Activated B cell treated with CpG ODN at 0.5 μM for 24 hours (primary cell): ENCODE measurements at regions of chr1 and their contacts with region 1.

Region 1: DNA sequence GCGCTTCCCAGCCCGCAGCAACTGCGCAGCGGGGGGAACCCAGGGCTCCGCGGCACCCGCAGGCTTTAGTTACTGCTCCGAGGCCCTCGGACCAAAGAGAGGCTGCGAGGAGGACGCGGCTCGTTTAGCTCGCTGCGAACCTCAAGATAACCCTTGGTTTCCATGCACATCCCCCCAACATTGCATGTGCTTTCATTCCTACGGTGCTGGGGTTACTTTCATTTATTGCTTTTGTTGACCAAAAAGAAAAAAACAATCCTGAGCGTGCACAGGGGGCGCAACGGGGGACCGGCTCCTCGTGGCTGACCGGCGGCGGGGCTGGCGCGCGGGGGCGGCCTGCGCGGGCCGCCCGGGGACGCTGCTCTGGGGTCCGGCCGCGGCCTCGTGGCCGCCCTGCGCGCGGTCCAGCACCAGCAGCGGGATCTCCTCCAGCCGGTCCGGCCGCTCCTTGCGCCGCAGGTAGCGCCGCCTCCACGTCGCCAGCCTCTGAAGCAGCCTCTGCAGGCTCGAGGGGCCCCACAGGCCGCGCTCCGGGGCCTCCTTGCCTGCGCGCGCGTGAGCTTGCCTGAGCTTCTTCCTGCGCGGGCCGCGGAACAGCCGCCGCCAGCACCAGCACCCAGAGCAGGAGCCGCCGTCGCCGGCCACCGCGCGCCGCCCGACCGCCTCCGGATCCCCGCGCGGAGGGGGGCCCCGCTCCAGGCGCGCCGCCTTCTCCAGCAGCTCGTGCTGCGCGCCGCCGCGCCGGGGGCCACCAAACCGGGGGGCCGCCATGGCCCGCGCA is 77.4 kb downstream of the DESI2 start:
- DNase-seq: peak; percentile 48
- ATAC-seq: peak; percentile 46
- H3K4me3 Mint-ChIP-seq: peak overlapping the region; percentile 87
- H3K27ac Mint-ChIP-seq: peak overlapping the region; percentile 83
- H3K4me1 Mint-ChIP-seq: peaks cover 23% of the 10 kb centered on the region
- H3K27me3 Mint-ChIP-seq: no peaks in the 10 kb centered on the region
- CTCF ChIP-seq: no peak

Region 2: GRCh38 chr1:244461245-244462071 is 268.9 kb before region 1 on chr1 and contains the start of gene CATSPERE:
- CTCF ChIA-PET with region 1: no interaction called
- POLR2A ChIA-PET with region 1: no interaction called
- intact Hi-C with region 1: loop called (anchors 5 kb)
- DNase-seq: peak; percentile 79
- ATAC-seq: peak; percentile 97
- H3K4me3 Mint-ChIP-seq: peak within 1 kb of the TSS; percentile 86
- H3K27ac Mint-ChIP-seq: peak within 1 kb of the TSS; percentile 78
- H3K4me1 Mint-ChIP-seq: peaks cover 15% of the 10 kb centered on the region
- H3K27me3 Mint-ChIP-seq: no peaks in the 10 kb centered on the region
- CTCF ChIP-seq: no peak
- total RNA-seq, gene CATSPERE: 0.91 and 1.1 TPM in 2 replicates

Region 3: GRCh38 chr1:244545511-244545910 is 184.8 kb before region 1 on chr1:
- CTCF ChIA-PET with region 1: no interaction called
- POLR2A ChIA-PET with region 1: no interaction called
- intact Hi-C with region 1: no loop called
- DNase-seq: no peak
- ATAC-seq: no peak
- H3K4me3 Mint-ChIP-seq: no peak overlapping the region
- H3K27ac Mint-ChIP-seq: no peak overlapping the region
- H3K4me1 Mint-ChIP-seq: no peaks in the 10 kb centered on the region
- H3K27me3 Mint-ChIP-seq: no peaks in the 10 kb centered on the region
- CTCF ChIP-seq: no peak

Region 4: DNA sequence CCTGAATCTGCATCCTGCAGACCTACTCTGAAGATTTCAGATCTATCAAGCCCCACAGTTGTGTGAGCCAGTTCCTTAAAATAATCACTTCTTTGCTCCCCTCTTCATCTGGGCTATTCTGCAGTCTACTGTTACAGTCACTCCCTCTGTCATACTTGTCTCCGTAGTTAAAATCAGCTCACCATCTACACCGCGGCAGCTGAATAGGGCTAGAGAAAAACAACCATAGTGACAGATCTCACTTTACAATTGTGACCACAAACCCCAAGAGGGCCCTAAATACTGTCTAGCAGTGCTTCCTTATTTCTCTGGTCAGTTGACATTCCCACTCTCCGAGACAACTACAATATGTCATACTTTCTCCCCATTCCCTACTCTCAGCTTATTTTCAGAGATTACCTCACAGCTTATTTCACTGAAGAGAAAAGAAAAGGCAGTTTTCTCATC is 64.5 kb before region 1 on chr1:
- CTCF ChIA-PET with region 1: no interaction called
- POLR2A ChIA-PET with region 1: interaction called, 4 read pairs
- intact Hi-C with region 1: loop called (anchors 2 kb)
- DNase-seq: no peak
- ATAC-seq: peak; percentile 87
- H3K4me3 Mint-ChIP-seq: no peak overlapping the region
- H3K27ac Mint-ChIP-seq: no peak overlapping the region
- H3K4me1 Mint-ChIP-seq: peaks cover 31% of the 10 kb centered on the region
- H3K27me3 Mint-ChIP-seq: no peaks in the 10 kb centered on the region
- CTCF ChIP-seq: no peak